Activated CD4-positive, alpha-beta T cell treated with anti-CD3 and anti-CD28 coated beads, Interleukin-2, amount 10 ng/mL, durations not matched to agents 24 days and 14 days (primary cell): ENCODE measurements at regions of chr4 and their contacts with region 1.

Region 1: DNA sequence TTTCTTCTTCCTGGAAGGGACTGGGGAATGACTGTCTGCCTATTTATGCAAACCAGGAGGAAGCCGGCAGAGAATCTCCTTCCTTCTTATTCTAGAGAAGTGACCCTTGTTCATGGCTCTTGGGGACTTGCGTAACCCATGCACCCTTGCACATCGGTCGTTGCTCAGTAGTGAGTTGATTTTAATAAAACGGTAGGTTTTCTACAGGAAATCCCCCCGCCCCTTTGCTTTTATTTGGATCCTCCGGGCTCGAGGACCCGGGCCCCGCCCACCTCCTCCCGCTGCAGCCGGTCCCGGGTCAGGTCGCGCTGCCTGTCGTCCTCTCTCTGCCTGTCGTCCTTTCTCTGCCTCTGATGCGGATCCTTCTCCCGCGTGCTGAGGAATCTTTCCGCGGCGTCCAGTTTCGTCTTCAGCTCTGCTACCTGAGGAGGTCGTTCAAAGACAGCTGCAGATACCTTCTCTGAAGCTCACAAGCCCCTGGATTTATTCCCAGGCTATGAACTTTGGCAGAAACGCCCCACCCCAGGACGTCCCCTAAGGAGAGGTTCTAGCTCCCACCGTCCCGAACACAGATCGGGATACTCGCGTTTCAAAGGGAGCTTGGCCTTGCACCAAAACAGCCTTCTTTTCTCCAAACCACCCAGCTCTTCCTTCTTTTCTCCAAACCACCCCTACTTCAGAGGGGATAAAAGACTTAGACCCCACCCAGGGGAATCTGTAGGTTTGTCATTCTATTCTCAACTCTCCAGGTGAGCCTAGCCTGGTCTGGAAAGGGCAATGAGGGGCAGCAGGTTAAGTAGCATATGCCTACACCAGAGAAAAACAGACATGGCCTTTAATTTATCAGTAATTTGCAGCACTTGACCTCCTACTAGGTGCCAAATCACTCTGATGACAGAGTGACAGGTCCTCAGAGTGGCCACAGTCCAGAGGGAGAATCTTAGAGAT is 7.0 kb downstream of the TNIP3 start:
- DNase-seq: peak; percentile 75
- H3K4me3 Mint-ChIP-seq: peak overlapping the region; percentile 80
- H3K27ac Mint-ChIP-seq: no peak overlapping the region
- H3K4me1 Mint-ChIP-seq: peaks cover 39% of the 10 kb centered on the region
- H3K27me3 Mint-ChIP-seq: peaks cover 19% of the 10 kb centered on the region

Region 2: GRCh38 chr4:119212234-119212963 is 1944.7 kb before region 1 on chr4 and contains the start of gene USP53:
- intact Hi-C with region 1: loop called (anchors 10 kb)
- DNase-seq: peak; percentile 98
- H3K4me3 Mint-ChIP-seq: peak within 1 kb of the TSS; percentile 95
- H3K27ac Mint-ChIP-seq: peak within 1 kb of the TSS; percentile 93
- H3K4me1 Mint-ChIP-seq: peaks cover 36% of the 10 kb centered on the region
- H3K27me3 Mint-ChIP-seq: no peaks in the 10 kb centered on the region
- total RNA-seq, gene USP53: 6.2 and 7.3 TPM in 2 replicates

Region 3: DNA sequence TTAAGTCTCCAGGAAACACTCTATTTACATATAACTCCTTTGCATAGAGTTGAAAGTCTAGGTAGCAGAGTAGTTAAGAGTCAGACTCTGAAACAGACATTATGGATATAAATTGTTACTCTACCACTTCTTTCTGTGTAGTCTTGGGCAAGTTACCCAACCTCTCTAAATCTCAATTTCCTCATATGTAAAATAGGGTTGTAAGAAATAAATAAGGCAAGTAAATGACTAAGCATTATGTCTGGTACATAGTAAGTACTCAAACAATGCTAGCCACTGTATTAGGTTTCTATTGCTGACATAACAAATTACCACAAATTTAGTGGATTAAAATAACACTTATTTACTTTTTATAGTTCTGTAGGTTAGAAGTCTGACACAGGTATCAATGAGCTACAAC is 628.7 kb before region 1 on chr4:
- intact Hi-C with region 1: no loop called
- DNase-seq: no peak
- H3K4me3 Mint-ChIP-seq: no peak overlapping the region
- H3K27ac Mint-ChIP-seq: no peak overlapping the region
- H3K4me1 Mint-ChIP-seq: no peaks in the 10 kb centered on the region
- H3K27me3 Mint-ChIP-seq: no peaks in the 10 kb centered on the region

Region 4: DNA sequence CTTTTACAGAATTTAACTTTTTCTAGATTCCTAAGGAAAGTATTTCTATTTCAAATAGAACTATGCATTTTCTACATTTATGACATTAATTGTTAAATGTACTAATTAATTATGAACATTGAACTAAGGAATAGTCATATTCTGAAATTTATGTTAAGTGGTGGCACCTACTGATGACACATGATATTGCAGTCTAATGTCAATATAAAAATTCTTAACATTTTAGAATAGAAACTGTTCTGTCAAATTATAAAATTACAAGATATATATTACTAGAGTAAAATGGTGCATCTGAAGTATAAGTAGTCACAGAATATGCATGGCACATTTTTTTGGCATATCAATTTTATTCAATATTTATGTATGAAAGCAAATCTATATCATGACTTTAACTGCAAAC is 44.6 kb before region 1 on chr4:
- intact Hi-C with region 1: loop called (anchors 1 kb)
- DNase-seq: no peak
- H3K4me3 Mint-ChIP-seq: no peak overlapping the region
- H3K27ac Mint-ChIP-seq: no peak overlapping the region
- H3K4me1 Mint-ChIP-seq: peaks cover 11% of the 10 kb centered on the region
- H3K27me3 Mint-ChIP-seq: peaks cover 31% of the 10 kb centered on the region

Region 5: DNA sequence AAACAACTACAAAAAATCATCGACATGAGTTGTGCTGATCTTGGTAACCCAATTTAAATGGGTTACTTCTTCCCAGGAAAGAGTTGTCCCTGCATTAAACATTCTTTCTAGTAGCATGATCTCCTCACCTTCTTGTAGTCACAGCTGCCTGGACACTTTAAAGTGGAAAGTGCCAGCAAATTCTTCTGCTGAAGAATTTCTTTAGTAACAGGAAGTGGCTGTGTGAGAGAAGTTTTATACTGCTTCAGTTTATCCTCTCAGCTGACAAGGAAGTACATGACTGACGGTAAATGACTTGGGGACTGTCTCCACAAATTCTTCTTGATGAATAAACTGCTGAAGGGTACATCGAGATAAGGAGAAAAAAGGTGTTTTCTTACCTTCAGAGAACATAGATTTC is 25.2 kb after region 1 on chr4:
- intact Hi-C with region 1: loop called (anchors 1 kb)
- DNase-seq: peak; percentile 84
- H3K4me3 Mint-ChIP-seq: peak overlapping the region; percentile 79
- H3K27ac Mint-ChIP-seq: peak overlapping the region; percentile 90
- H3K4me1 Mint-ChIP-seq: peaks cover 55% of the 10 kb centered on the region
- H3K27me3 Mint-ChIP-seq: no peaks in the 10 kb centered on the region

Region 6: GRCh38 chr4:121192480-121192879 is 35.4 kb after region 1 on chr4:
- intact Hi-C with region 1: no loop called
- DNase-seq: peak; percentile 75
- H3K4me3 Mint-ChIP-seq: peak overlapping the region; percentile 53
- H3K27ac Mint-ChIP-seq: no peak overlapping the region
- H3K4me1 Mint-ChIP-seq: peaks cover 45% of the 10 kb centered on the region
- H3K27me3 Mint-ChIP-seq: no peaks in the 10 kb centered on the region

Region 7: DNA sequence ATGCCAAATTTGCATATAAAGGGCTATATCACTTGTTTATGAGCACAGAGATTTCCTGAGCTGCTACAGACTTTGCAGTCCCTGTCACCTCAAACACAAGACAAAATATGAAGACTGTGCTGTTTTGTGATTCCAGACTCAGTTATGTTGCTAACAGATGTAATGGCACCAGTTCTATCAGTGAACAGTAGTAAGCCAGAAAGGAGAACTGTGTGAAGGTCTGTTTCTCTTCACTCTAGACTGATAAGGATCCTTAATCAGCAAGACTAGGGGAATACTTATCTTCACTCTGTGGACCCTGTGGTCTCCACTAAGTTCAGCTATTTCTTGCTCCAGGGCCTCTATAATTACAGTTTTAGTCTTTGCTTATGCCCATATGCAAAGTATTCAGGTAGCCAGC is 457.0 kb after region 1 on chr4:
- intact Hi-C with region 1: no loop called
- DNase-seq: no peak
- H3K4me3 Mint-ChIP-seq: no peak overlapping the region
- H3K27ac Mint-ChIP-seq: no peak overlapping the region
- H3K4me1 Mint-ChIP-seq: no peaks in the 10 kb centered on the region
- H3K27me3 Mint-ChIP-seq: peaks cover 9% of the 10 kb centered on the region

Region 8: GRCh38 chr4:121789960-121790829 is 633.1 kb after region 1 on chr4:
- intact Hi-C with region 1: loop called (anchors 10 kb)
- DNase-seq: no peak
- H3K4me3 Mint-ChIP-seq: no peak overlapping the region
- H3K27ac Mint-ChIP-seq: no peak overlapping the region
- H3K4me1 Mint-ChIP-seq: peaks cover 13% of the 10 kb centered on the region
- H3K27me3 Mint-ChIP-seq: peaks cover 11% of the 10 kb centered on the region

Region 9: GRCh38 chr4:122073617-122074016 is 916.5 kb after region 1 on chr4:
- intact Hi-C with region 1: no loop called
- DNase-seq: no peak
- H3K4me3 Mint-ChIP-seq: no peak overlapping the region
- H3K27ac Mint-ChIP-seq: no peak overlapping the region
- H3K4me1 Mint-ChIP-seq: no peaks in the 10 kb centered on the region
- H3K27me3 Mint-ChIP-seq: peaks cover 30% of the 10 kb centered on the region